Panc1 (cell line): ENCODE measurements at regions of chr6 and their contacts with region 1.

Region 1: GRCh38 chr6:117494283-117494682 is 11.8 kb downstream of the DCBLD1 start:
- DNase-seq: no peak
- ATAC-seq: no peak
- H3K4me3 ChIP-seq: peak overlapping the region; percentile 11 to 38; a peak in 3 of 4 replicates
- H3K27ac ChIP-seq: peak overlapping the region; percentile 92
- H3K4me1 ChIP-seq: peaks cover 79% of the 10 kb centered on the region
- H3K27me3 ChIP-seq: no peaks in the 10 kb centered on the region
- CTCF ChIP-seq: no peak

Region 2: GRCh38 chr6:117317261-117317660 is 177.0 kb before region 1 on chr6:
- CTCF ChIA-PET with region 1: no interaction called
- POLR2A ChIA-PET with region 1: no interaction called
- in situ Hi-C with region 1: no loop called
- intact Hi-C with region 1: no loop called
- DNase-seq: peak; percentile 20
- ATAC-seq: peak; percentile 72; the same call in 1 of the 2 replicates
- H3K4me3 ChIP-seq: no peak overlapping the region
- H3K27ac ChIP-seq: no peak overlapping the region
- H3K4me1 ChIP-seq: no peaks in the 10 kb centered on the region
- H3K27me3 ChIP-seq: peaks cover 2% of the 10 kb centered on the region; the same call in 1 of the 2 replicates
- CTCF ChIP-seq: peak; percentile 68

Region 3: GRCh38 chr6:117547688-117548621 is 53.7 kb after region 1 on chr6:
- CTCF ChIA-PET with region 1: interaction called, 3 read pairs
- POLR2A ChIA-PET with region 1: no interaction called
- in situ Hi-C with region 1: no loop called
- intact Hi-C with region 1: loop called (anchors 5 kb)
- DNase-seq: no peak
- ATAC-seq: peak; percentile 59
- H3K4me3 ChIP-seq: no peak overlapping the region
- H3K27ac ChIP-seq: peak overlapping the region; percentile 95
- H3K4me1 ChIP-seq: peaks cover 57% of the 10 kb centered on the region
- H3K27me3 ChIP-seq: no peaks in the 10 kb centered on the region
- CTCF ChIP-seq: no peak